ENCODE measurements at regions of chr3 and their contacts with region 1.

Region 1: GRCh38 chr3:124786441-124787241 is 56.4 kb downstream of the UMPS start:
- DNase-seq: no peak
- ATAC-seq: peak; percentile 34

Region 2: DNA sequence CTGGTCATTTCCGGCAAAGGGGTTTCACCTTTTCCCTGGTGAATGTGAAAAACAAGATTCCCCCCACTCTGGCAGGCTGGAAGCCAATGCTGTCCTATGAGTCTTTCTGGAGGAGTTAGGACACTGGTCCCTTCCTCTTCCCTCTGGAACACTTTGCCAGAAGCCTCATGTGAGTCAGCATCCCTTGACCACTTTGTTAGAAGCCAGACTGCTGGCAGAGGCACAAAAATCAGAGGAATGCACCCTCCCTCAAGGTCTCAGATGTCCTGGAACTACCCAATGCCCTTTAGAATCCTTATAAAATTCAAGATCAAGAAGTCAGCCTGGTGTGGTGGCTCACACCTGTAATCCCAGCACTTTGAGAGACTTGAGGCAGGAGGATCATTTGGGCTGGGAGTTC is 74.0 kb after region 1 on chr3:
- intact Hi-C with region 1: no loop called
- DNase-seq: peak; percentile 63
- ATAC-seq: peak; percentile 93

Region 3: GRCh38 chr3:124887177-124887931 is 100.7 kb after region 1 on chr3 and contains the start of gene ITGB5:
- intact Hi-C with region 1: loop called (anchors 5 kb)
- DNase-seq: peak; percentile 90
- ATAC-seq: peak; percentile 93
- total RNA-seq, gene ITGB5: 112 TPM

Region 4: GRCh38 chr3:125045965-125046364 is 259.3 kb after region 1 on chr3:
- intact Hi-C with region 1: no loop called
- DNase-seq: no peak
- ATAC-seq: no peak